SK-N-SH (cell line): ENCODE measurements at regions of chr7 and their contacts with region 1.

Region 1: DNA sequence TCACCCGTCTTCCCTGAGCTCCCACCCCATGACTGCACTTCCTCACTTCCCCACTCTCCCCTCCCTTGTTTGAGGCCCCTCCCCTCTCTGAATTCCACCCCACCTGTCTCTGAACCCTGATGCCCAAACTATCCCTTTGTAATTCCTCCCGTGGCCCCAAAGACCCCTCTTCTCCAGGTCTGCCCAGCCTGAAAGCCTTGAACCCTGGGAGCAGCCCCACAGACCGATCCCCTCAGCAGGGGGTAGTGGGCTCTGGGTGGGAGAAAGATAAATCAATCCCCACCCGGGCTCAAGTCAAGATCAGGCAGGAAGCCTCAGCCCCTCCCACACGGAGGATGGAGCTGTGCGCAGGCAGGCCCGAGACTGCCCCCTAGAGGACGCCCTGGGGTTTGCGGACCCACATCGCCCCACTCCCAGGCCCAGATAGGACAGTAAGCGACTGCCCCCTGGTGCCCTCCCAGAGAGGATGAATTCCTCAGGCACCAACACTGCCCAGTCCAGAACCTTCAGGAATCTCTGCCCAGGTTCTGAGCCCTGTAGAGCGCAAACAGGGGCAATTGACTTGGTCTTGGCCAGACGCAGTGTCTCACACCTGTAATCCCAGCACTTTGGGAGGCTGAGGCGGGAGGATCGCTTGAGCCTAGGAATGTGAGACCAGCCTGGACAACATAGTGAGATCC is 11.7 kb downstream of the HSPB1 start:
- DNase-seq: peak; percentile 97
- H3K4me3 ChIP-seq: no peak overlapping the region; a peak in 2 of 4 replicates
- H3K27ac ChIP-seq: no peak overlapping the region
- H3K4me1 ChIP-seq: peaks cover 4 to 26% of the 10 kb centered on the region in 2 experiments; a peak in 2 of 4 replicates
- H3K27me3 ChIP-seq: no peaks in the 10 kb centered on the region
- CTCF ChIP-seq: peak; percentile 100
- EP300 ChIP-seq: peak in 1 of 2 experiments; percentile 69; a peak in 3 of 4 replicates
- RAD21 ChIP-seq: peak; percentile 100

Region 2: DNA sequence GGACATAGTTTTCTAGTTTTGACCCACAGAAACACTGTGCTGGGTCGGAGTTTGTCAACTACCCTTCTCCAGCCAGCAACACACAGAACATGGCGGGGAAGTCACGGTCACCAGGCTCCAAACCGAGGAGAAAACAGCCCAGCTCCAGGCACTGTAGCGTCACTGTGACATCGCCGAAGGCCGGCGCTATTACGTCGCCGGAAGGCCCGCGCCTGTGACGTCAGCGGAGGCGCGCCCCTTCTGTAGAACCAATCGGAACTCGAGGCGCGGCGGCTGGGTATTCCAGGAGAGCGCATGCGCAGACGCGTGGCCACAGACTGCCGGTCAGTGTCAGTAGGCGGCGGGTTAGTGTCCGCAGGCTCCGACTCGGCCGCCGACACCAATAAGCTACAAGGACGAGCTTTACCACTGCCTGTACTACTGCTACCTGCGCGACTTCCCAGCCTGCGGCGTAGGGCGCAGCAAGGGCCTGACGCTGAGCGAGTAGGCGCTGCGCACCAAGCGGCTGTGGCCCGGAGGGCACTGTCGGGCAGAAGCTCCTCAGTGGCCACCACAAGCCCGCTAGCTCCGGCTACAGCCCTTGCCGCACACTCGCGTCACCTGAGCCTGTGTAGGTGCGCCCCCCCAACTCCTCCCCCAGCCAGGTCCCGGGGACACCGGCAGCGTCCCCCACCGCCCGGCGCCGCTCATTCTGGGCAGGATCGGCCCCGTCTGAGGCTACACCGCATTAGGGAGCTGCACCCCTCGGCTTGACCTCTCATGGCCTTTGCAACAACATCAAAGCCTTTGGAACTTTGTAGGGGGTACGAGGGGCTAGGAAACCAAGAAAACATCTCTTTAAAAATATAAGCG is 147.6 kb before region 1 on chr7:
- CTCF ChIA-PET with region 1: interaction called, 11 read pairs
- POLR2A ChIA-PET with region 1: interaction called, 4 read pairs
- DNase-seq: peak; percentile 99
- H3K4me3 ChIP-seq: peak overlapping the region; percentile 65 to 69
- H3K27ac ChIP-seq: peak overlapping the region; percentile 59 to 70; a peak in 3 of 4 replicates
- H3K4me1 ChIP-seq: peaks cover 0 to 3% of the 10 kb centered on the region in 2 experiments; a peak in 1 of 4 replicates
- H3K27me3 ChIP-seq: no peaks in the 10 kb centered on the region
- CTCF ChIP-seq: peak; percentile 28; the same call in 1 of the 2 replicates
- EP300 ChIP-seq: no peak
- RAD21 ChIP-seq: peak; percentile 27

Region 3: DNA sequence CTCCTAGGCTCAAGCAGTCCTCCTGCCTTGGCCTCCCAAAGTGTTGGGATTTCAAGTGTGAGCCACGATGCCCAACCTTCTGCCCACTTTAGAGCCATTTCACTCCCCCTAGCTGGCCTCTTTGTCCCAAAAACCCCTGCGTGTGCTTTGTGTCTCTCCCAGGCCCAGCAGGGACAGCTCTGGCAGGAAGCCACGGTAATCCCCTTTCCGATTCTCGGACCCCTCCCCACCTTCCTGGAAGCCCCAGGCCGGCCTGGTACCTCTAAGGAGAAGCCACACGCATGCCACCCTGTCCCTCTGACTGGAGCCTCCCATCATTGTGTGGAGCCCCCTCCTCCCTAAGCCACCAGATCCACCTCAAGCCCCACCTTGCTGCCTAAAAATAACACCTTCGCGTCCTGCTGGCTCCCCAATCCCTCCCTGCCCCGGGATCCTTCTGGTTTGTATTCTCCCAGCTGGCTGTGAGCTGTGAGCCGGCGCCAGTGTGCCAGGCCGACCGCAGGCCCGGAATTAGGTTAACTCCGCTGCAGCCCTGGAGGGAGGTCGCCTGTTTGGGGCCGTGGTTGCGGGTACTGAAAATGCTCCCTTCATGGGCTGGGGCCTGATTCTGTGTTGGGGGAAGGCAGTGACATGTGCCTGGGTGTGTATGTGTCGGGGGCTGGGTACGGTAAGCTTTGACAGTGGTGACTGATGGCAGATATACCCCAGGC is 128.8 kb before region 1 on chr7:
- CTCF ChIA-PET with region 1: interaction called, 35 read pairs
- POLR2A ChIA-PET with region 1: interaction called, 6 read pairs
- DNase-seq: peak; percentile 83
- H3K4me3 ChIP-seq: no peak overlapping the region
- H3K27ac ChIP-seq: peak overlapping the region in 1 of 2 experiments; percentile 86; a peak in 2 of 4 replicates
- H3K4me1 ChIP-seq: peaks cover 0 to 9% of the 10 kb centered on the region in 2 experiments; a peak in 1 of 4 replicates
- H3K27me3 ChIP-seq: no peaks in the 10 kb centered on the region
- CTCF ChIP-seq: no peak
- EP300 ChIP-seq: peak in 1 of 2 experiments; percentile 43; a peak in 1 of 4 replicates
- RAD21 ChIP-seq: peak; percentile 34

Region 4: GRCh38 chr7:76272851-76273497 is 41.2 kb before region 1 on chr7:
- CTCF ChIA-PET with region 1: interaction called, 774 read pairs
- POLR2A ChIA-PET with region 1: interaction called, 3 read pairs
- DNase-seq: no peak
- H3K4me3 ChIP-seq: no peak overlapping the region
- H3K27ac ChIP-seq: no peak overlapping the region
- H3K4me1 ChIP-seq: no peaks in the 10 kb centered on the region
- H3K27me3 ChIP-seq: no peaks in the 10 kb centered on the region
- CTCF ChIP-seq: no peak
- EP300 ChIP-seq: no peak
- RAD21 ChIP-seq: no peak

Region 5: GRCh38 chr7:76291343-76292212 is 22.6 kb before region 1 on chr7:
- CTCF ChIA-PET with region 1: interaction called, 774 read pairs
- POLR2A ChIA-PET with region 1: interaction called, 9 read pairs
- DNase-seq: peak; percentile 92
- H3K4me3 ChIP-seq: peak overlapping the region in 1 of 2 experiments; percentile 0; a peak in 1 of 4 replicates
- H3K27ac ChIP-seq: peak overlapping the region; percentile 67 to 91
- H3K4me1 ChIP-seq: peaks cover 26 to 36% of the 10 kb centered on the region in 2 experiments; a peak in 3 of 4 replicates
- H3K27me3 ChIP-seq: no peaks in the 10 kb centered on the region
- CTCF ChIP-seq: peak; percentile 99
- EP300 ChIP-seq: peak; percentile 18 to 56; a peak in 2 of 4 replicates
- RAD21 ChIP-seq: peak; percentile 98

Region 6: DNA sequence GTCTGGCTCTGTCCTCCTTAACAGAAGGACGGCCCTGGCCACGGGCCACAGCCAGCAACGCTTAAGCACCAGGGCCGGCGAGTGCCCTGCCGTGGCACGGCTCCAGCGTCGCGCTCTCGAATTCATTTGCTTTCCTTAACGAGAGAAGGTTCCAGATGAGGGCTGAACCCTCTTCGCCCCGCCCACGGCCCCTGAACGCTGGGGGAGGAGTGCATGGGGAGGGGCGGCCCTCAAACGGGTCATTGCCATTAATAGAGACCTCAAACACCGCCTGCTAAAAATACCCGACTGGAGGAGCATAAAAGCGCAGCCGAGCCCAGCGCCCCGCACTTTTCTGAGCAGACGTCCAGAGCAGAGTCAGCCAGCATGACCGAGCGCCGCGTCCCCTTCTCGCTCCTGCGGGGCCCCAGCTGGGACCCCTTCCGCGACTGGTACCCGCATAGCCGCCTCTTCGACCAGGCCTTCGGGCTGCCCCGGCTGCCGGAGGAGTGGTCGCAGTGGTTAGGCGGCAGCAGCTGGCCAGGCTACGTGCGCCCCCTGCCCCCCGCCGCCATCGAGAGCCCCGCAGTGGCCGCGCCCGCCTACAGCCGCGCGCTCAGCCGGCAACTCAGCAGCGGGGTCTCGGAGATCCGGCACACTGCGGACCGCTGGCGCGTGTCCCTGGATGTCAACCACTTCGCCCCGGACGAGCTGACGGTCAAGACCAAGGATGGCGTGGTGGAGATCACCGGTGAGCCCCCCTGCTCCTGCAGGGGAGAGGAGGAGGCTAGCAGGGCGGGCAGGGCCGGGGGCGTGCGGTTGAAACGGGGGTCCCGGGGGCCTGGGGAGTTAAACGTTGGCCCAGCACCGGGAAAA is 11.6 kb before region 1 on chr7 and contains the start of gene HSPB1:
- CTCF ChIA-PET with region 1: interaction called, 774 read pairs
- POLR2A ChIA-PET with region 1: interaction called, 10 read pairs
- DNase-seq: peak; percentile 93
- H3K4me3 ChIP-seq: peak within 1 kb of the TSS; percentile 63 to 96
- H3K27ac ChIP-seq: peak within 1 kb of the TSS; percentile 71 to 86
- H3K4me1 ChIP-seq: peaks cover 18 to 21% of the 10 kb centered on the region in 2 experiments; a peak in 2 of 4 replicates
- H3K27me3 ChIP-seq: no peaks in the 10 kb centered on the region
- CTCF ChIP-seq: 0 out of 2 replicates have a peak, but pooled peaks have one; percentile 21
- EP300 ChIP-seq: peak; percentile 44 to 93; a peak in 3 of 4 replicates
- RAD21 ChIP-seq: peak; percentile 38; the same call in 1 of the 2 replicates
- polyA plus RNA-seq, gene HSPB1: 439 and 824 TPM in 2 replicates

Region 7: DNA sequence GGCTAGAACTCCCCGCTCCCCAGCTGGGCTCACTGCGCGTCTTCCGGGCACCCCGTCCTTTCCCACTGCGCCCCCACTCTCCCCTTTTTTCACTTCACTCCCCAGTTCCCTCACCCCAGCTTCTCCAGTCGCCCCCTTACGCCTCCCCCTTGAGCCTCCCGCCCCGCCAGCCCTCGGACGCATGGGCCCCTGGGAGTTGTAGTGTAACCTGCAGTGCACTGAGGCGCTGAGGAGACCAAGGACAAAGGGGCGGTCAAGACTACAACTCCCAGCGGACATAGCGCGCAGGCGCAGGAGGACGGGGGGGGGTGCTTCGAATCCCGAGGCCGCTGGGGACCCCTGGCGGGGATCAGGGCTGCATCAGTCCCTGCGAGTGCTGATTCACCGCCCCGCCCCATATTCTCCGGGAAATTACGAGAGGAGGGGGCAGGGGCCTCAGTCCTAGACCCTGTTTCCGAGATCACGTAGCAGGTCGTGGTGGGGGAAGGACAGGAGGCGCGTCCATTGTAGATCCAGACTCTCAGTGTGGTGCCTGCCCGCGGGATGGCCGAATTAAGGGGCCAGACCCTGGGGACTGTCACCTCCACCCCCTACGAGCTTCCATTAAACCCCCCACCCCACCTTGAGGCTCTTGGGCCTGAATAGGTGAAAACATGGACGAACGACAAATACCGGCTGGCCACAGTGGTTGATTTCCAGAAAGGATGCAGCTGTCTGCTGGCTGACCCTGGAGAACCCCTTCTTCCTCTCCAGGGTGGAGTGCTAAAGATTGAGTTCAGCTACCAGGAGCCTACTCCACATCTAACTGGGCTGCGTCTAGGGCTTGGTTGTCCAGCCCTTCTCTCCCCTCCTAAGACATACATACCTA is 45.2 kb after region 1 on chr7:
- CTCF ChIA-PET with region 1: interaction called, 32 read pairs
- POLR2A ChIA-PET with region 1: interaction called, 24 read pairs
- DNase-seq: peak; percentile 98
- H3K4me3 ChIP-seq: peak overlapping the region; percentile 82 to 88
- H3K27ac ChIP-seq: peak overlapping the region; percentile 92 to 96
- H3K4me1 ChIP-seq: peaks cover 17 to 27% of the 10 kb centered on the region in 2 experiments
- H3K27me3 ChIP-seq: no peaks in the 10 kb centered on the region
- CTCF ChIP-seq: peak; percentile 90
- EP300 ChIP-seq: peak in 1 of 2 experiments; percentile 37; a peak in 1 of 4 replicates
- RAD21 ChIP-seq: peak; percentile 73